Activated T-helper 1 cell treated with anti-CD3 and anti-CD28 coated beads, Interleukin-12 subunit alpha, Interleukin-12 subunit beta, Interleukin-2, Interleukin-4 antibody, amounts not matched to agents 30 ng/mL and 10 ng/mL and 1 ng/mL, durations not matched to agents 14 hours and 24 hours and 36 hours (primary cell): ENCODE measurements at regions of chr3 and their contacts with region 1.

Region 1: DNA sequence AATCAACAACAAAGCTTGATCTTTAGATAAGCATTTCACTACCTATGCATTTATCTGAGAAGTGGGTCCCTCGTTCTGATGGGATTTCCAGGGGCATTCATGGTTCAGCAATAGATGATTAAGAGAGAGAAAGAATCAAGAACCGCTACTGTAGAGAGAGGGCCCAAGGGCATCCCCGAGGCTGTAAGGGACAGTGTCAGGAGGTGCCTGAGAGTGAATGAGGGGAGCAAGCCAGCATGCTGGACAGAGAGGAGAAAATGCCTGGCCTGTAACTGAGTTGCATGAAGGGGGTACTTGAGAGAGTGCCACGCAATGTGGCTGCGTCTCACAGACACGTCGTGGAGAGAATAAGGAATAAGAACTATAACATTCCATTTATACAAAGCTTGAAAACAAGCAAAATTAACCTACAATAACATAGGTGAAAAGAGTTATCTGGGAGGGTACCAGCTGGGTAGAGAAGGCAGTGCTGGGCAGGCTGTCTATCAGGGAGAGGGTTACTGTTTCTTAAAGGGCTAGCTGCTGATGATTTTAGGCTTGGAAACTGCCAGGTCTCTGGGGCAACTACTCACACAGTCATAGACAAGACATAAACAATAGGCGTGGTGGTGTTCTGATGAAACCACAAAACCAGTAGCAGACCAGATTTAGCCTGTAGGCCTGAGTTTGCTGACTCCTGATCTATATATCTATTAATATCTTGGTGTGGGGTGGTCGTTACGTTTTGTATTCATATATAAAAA is 374.6 kb upstream of the CFAP20DC start:
- DNase-seq: no peak
- H3K4me3 Mint-ChIP-seq: no peak overlapping the region
- H3K27ac Mint-ChIP-seq: peak overlapping the region; percentile 3
- H3K4me1 Mint-ChIP-seq: peaks cover 52% of the 10 kb centered on the region
- H3K27me3 Mint-ChIP-seq: no peaks in the 10 kb centered on the region

Region 2: DNA sequence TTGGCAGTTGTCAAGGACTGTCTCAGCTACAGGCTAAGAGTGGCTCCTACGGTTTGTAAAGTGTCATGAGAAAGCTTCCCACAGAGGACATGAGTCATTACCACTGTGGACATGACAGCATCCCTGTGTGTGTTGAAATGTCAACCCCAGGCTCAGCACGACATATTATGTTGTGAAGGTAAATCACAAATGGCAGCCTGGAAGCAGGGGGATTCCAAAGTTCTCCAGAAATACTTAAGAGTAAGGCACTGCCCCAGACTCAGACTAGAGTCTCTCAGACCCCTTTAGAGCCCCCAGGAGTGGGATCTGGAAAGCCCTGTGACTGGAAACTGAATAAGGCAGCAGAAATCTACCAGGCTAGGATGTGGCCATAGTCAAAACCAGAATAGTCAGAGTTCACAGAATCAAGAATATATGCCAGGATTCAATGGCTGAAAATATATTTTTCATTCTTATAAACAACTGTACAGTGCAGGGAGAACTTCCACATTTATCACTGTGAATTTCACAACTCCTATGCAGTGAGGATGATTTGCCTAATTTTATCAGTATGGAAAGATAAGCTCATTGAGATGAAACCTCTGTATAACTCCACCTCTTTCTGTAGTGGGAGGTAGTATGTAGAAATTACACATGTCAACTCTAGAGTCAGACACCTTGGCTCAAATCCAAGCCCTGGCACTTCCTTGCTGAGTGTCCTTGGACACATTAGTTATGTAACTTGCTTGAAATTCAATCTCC is 137.5 kb before region 1 on chr3:
- intact Hi-C with region 1: loop called (anchors 1 kb)
- DNase-seq: peak; percentile 29
- H3K4me3 Mint-ChIP-seq: peak overlapping the region; percentile 1
- H3K27ac Mint-ChIP-seq: peak overlapping the region; percentile 91
- H3K4me1 Mint-ChIP-seq: peaks cover 37% of the 10 kb centered on the region
- H3K27me3 Mint-ChIP-seq: no peaks in the 10 kb centered on the region

Region 3: DNA sequence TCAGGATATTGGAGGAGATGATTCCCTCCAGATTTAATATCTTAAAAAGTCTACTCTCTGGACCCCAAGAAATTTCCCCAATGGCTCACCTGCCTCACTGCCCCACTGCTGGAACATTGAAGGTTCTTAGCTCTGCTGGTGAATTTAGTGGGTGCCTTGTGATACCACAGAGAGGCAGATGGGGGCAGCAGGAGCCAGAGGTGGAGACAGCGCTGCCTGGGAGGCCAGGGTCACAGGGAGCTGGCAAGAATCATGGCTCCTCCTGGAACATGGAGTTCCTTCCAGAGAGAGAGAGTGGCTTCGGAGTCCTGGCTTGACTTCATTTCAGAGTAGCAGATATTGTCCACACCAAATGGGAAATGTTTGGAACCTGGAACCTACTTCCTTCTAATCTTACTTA is 111.1 kb before region 1 on chr3:
- intact Hi-C with region 1: loop called (anchors 10 kb)
- DNase-seq: peak; percentile 22
- H3K4me3 Mint-ChIP-seq: no peak overlapping the region
- H3K27ac Mint-ChIP-seq: peak overlapping the region; percentile 49
- H3K4me1 Mint-ChIP-seq: peaks cover 47% of the 10 kb centered on the region
- H3K27me3 Mint-ChIP-seq: peaks cover 2% of the 10 kb centered on the region

Region 4: GRCh38 chr3:59406943-59407342 is 17.5 kb before region 1 on chr3:
- intact Hi-C with region 1: loop called (anchors 2 kb)
- DNase-seq: no peak
- H3K4me3 Mint-ChIP-seq: no peak overlapping the region
- H3K27ac Mint-ChIP-seq: peak overlapping the region; percentile 31
- H3K4me1 Mint-ChIP-seq: peaks cover 28% of the 10 kb centered on the region
- H3K27me3 Mint-ChIP-seq: no peaks in the 10 kb centered on the region

Region 5: GRCh38 chr3:59444294-59444671 is 19.8 kb after region 1 on chr3:
- intact Hi-C with region 1: loop called (anchors 1 kb)
- DNase-seq: no peak
- H3K4me3 Mint-ChIP-seq: peak overlapping the region; percentile 74
- H3K27ac Mint-ChIP-seq: peak overlapping the region; percentile 94
- H3K4me1 Mint-ChIP-seq: peaks cover 61% of the 10 kb centered on the region
- H3K27me3 Mint-ChIP-seq: no peaks in the 10 kb centered on the region

Region 6: DNA sequence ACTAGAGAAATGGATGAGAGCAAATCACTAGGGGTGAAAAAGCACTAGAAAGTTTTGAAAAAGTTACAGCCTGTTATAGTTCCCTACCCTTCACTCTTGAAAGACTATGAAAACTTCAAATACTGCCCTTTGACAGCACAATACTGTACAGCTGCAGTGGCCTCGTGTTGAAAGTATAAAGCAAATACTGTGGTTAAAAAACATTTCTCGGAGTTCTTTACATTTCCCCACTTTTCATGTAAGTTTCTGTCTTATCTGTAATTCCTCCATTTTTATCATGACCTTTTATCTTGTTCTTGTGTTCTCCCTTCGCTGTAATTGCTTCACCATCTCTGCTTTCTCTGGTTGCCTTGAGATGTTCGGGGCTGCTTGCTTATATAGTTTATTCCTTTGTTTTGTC is 49.2 kb after region 1 on chr3:
- intact Hi-C with region 1: no loop called
- DNase-seq: no peak
- H3K4me3 Mint-ChIP-seq: no peak overlapping the region
- H3K27ac Mint-ChIP-seq: peak overlapping the region; percentile 0
- H3K4me1 Mint-ChIP-seq: peaks cover 38% of the 10 kb centered on the region
- H3K27me3 Mint-ChIP-seq: no peaks in the 10 kb centered on the region

Region 7: DNA sequence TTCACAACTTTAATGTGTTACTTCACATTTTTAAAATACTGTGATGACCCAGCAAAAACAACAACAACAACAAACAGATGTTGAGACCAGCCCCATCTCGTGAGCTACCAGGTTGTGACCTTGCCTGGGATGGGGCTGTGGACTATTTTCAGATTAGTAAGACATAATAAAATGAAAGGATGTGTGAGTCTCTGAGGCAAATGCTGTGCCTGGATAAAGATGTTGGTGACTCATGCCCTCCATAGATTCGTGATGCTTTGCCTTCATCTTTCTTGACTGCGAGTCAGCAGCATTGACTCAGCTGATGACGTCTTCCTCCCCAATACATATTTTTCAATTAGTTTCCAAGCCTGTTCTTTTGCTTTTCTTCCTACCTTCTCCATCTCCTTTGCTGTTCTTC is 78.4 kb after region 1 on chr3:
- intact Hi-C with region 1: loop called (anchors 2 kb)
- DNase-seq: no peak
- H3K4me3 Mint-ChIP-seq: no peak overlapping the region
- H3K27ac Mint-ChIP-seq: peak overlapping the region; percentile 21
- H3K4me1 Mint-ChIP-seq: peaks cover 16% of the 10 kb centered on the region
- H3K27me3 Mint-ChIP-seq: no peaks in the 10 kb centered on the region

Region 8: DNA sequence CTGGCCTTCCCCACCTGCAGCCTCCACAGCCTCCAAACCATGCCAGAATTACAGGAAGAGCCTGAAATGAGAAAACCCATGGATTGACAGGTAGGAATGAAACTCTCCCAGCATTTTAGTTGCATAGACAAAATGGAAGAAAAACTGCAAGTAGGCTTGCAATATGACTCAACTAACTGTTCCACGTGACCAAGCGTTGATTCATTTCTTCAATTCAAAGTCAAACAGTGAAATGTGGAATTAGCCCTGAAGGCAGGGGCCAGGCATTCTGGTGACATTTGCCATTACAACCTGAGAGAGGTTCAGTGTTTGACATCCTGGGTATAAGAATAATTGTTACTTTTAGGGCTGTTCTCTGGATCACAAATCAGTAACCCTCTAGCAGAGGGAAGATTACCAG is 301.8 kb after region 1 on chr3:
- intact Hi-C with region 1: no loop called
- DNase-seq: peak; percentile 9
- H3K4me3 Mint-ChIP-seq: no peak overlapping the region
- H3K27ac Mint-ChIP-seq: no peak overlapping the region
- H3K4me1 Mint-ChIP-seq: peaks cover 26% of the 10 kb centered on the region
- H3K27me3 Mint-ChIP-seq: peaks cover 5% of the 10 kb centered on the region